Activated naive CD4-positive, alpha-beta T cell treated with anti-CD3 and anti-CD28 coated beads for 36 hours (primary cell): ENCODE measurements at regions of chr3 and their contacts with region 1.

Region 1: DNA sequence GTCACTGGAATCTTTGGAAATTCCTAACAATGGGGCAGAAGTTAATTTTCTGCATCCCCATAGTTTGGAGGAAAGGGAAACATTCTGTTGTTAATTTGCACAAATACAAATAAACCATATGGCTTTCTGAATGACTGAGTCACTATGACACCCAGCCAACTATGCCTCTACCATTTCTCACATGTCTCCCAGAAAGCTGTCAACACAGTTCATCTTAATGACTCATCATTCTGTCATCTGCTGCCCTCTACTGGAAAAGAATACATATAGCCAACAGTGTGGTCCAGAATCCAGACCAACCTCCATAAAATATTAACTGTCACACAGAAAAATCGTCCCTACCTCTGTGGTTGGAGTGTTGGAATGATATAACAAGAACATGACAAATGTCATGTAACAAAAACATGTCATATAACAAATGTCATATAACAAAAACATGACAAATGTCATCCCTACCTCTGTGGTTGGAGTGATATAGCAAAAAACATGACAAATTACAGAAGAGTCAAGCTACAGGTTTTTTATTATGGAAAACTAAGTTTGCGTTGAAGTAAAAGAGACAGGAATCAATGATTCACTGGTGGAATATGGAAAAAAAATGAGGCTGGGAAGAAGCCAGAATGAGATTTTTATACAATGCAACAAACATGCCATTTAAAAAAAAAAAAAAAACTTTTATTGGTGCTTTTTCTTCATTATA is 47.7 kb upstream of the GYG1 start:
- DNase-seq: peak; percentile 28
- H3K4me3 Mint-ChIP-seq: no peak overlapping the region
- H3K27ac Mint-ChIP-seq: no peak overlapping the region
- H3K4me1 Mint-ChIP-seq: no peaks in the 10 kb centered on the region
- H3K27me3 Mint-ChIP-seq: no peaks in the 10 kb centered on the region

Region 2: GRCh38 chr3:148075763-148076716 is 867.6 kb before region 1 on chr3:
- CTCF ChIA-PET with region 1: no interaction called
- intact Hi-C with region 1: loop called (anchors 10 kb)
- DNase-seq: no peak
- H3K4me3 Mint-ChIP-seq: no peak overlapping the region
- H3K27ac Mint-ChIP-seq: no peak overlapping the region
- H3K4me1 Mint-ChIP-seq: no peaks in the 10 kb centered on the region
- H3K27me3 Mint-ChIP-seq: no peaks in the 10 kb centered on the region

Region 3: GRCh38 chr3:148379763-148380382 is 563.8 kb before region 1 on chr3:
- CTCF ChIA-PET with region 1: no interaction called
- intact Hi-C with region 1: loop called (anchors 5 kb)
- DNase-seq: no peak
- H3K4me3 Mint-ChIP-seq: no peak overlapping the region
- H3K27ac Mint-ChIP-seq: no peak overlapping the region
- H3K4me1 Mint-ChIP-seq: no peaks in the 10 kb centered on the region
- H3K27me3 Mint-ChIP-seq: no peaks in the 10 kb centered on the region

Region 4: GRCh38 chr3:148861277-148861869 is 82.3 kb before region 1 on chr3:
- CTCF ChIA-PET with region 1: interaction called, 89 read pairs
- intact Hi-C with region 1: loop called (anchors 1 kb)
- DNase-seq: peak; percentile 6
- H3K4me3 Mint-ChIP-seq: no peak overlapping the region
- H3K27ac Mint-ChIP-seq: no peak overlapping the region
- H3K4me1 Mint-ChIP-seq: no peaks in the 10 kb centered on the region
- H3K27me3 Mint-ChIP-seq: peaks cover 8% of the 10 kb centered on the region

Region 5: DNA sequence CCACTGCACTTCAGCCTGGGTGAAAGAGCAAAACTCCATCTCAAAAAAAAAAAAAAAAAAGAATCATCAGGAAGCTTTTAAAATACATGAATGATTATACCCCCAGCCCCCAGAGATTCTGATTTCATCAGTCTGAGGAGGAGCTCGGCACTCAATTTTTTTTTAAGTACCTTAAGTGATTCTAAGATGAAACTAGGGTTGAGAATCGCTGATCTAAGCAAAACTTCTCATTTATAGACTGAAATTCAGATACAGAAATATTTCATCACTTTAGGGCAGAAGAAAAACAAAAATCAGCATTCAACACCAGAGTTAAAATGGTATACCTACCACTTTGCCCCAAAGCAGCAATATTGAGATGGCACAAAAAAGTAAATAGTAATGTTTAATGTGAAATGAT is 53.8 kb before region 1 on chr3:
- CTCF ChIA-PET with region 1: no interaction called
- intact Hi-C with region 1: no loop called
- DNase-seq: no peak
- H3K4me3 Mint-ChIP-seq: no peak overlapping the region
- H3K27ac Mint-ChIP-seq: no peak overlapping the region
- H3K4me1 Mint-ChIP-seq: no peaks in the 10 kb centered on the region
- H3K27me3 Mint-ChIP-seq: peaks cover 17% of the 10 kb centered on the region